ENCODE measurements at regions of chr22 and their contacts with region 1.

Region 1: DNA sequence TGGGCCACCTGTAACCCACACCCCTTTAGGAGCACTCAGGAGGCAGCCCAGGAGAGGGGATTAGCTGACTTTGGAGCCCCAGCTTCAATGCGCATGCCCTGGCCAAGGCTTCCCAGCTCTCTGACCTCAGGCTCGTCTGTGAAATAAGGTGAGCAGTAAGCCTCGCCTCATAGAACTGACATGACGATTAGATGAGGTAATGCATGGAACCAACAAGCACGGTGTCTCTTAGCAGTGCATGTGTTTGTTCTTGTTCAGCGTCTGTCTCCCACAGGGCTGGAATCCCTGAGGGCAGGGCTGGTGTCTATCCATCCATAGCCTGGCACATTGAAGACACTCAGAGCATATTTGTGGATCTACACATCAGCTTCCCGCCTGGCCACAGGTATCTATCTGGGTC is 415.4 kb downstream of the MN1 start:
- DNase-seq: no peak
- H3K4me3 ChIP-seq: no peak overlapping the region
- H3K27ac ChIP-seq: no peak overlapping the region
- H3K4me1 ChIP-seq: no peaks in the 10 kb centered on the region
- H3K27me3 ChIP-seq: no peaks in the 10 kb centered on the region
- CTCF ChIP-seq: no peak
- POLR2A ChIP-seq: no peak

Region 2: GRCh38 chr22:26763633-26764361 is 622.4 kb before region 1 on chr22:
- intact Hi-C with region 1: loop called (anchors 10 kb)
- DNase-seq: peak; percentile 48
- H3K4me3 ChIP-seq: no peak overlapping the region
- H3K27ac ChIP-seq: no peak overlapping the region
- H3K4me1 ChIP-seq: peaks cover 4% of the 10 kb centered on the region
- H3K27me3 ChIP-seq: no peaks in the 10 kb centered on the region
- CTCF ChIP-seq: no peak
- POLR2A ChIP-seq: no peak

Measured in testis (tissue), 5 donors.